Activated B cell treated with CpG ODN at 0.5 μM for 24 hours (primary cell): ENCODE measurements at regions of chr22 and their contacts with region 1.

Region 1: DNA sequence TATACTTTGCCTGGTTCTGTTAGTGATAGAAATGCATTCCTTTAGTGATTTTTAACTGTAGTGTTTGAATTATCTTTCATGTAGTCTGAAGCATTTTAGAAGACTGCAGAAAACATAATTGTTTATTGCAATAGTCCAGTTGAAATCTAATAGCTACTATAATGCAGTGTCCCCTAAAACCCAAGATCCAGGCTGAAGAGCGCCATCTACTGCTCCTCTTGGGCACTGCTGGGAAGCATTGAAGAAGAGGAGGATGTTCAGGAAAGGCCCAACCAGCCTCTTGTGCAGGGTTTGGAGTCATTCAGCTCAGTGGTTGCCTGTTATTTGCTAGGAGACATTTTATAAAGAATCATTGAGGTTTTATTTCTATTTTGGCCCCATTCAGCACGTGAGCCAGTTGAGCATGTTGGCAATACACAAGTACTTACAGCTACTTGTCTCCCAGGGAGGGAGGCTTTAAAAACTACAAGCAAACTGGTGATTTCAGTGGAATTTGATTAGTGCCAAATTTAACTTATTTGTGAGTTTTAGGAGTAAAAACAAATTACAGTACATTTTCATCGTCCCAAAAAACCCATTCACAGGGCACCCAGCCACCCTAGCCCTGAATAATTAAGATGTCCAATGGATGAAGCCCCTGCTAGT is 74.9 kb upstream of the HORMAD2 start:
- DNase-seq: peak; percentile 50
- ATAC-seq: peak; percentile 69
- H3K4me3 Mint-ChIP-seq: no peak overlapping the region
- H3K27ac Mint-ChIP-seq: no peak overlapping the region
- H3K4me1 Mint-ChIP-seq: no peaks in the 10 kb centered on the region
- H3K27me3 Mint-ChIP-seq: no peaks in the 10 kb centered on the region
- CTCF ChIP-seq: peak; percentile 98

Region 2: DNA sequence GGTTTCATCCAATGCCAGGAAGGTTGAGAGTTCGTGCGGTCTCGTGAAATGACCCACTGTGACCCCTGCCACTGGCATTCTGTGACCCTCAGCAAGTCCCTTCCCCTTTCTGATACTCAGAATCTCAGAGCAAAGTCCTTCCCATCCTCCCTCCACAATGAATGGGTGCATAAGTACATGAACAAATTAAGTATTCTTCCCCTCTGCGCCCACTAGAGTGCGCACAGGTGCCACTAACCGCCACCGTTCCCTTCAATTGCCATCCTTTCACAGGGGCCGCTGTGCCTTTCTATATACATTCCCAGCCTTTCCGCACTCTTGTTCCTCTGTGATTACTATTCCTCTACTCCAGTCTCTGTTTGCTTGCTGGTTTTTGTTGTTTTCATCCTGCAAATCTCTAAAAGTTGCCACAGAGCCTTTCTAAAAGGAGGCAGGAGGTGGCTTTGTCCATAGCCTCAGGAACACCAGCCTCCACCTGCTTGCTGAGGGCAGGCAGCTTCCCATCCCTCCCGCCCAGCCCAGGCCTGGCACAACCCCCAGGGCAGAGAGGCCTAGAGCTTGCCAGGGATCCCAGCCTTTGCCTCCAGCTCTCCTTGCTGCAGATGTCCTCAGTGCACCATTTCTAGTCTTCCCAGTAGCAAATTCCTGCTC is 610.3 kb before region 1 on chr22:
- CTCF ChIA-PET with region 1: no interaction called
- POLR2A ChIA-PET with region 1: no interaction called
- intact Hi-C with region 1: loop called (anchors 1 kb)
- DNase-seq: peak; percentile 54
- ATAC-seq: peak; percentile 87
- H3K4me3 Mint-ChIP-seq: no peak overlapping the region
- H3K27ac Mint-ChIP-seq: no peak overlapping the region
- H3K4me1 Mint-ChIP-seq: peaks cover 17% of the 10 kb centered on the region
- H3K27me3 Mint-ChIP-seq: peaks cover 2% of the 10 kb centered on the region
- CTCF ChIP-seq: peak; percentile 78

Region 3: GRCh38 chr22:29635734-29636357 is 369.5 kb before region 1 on chr22:
- CTCF ChIA-PET with region 1: interaction called, 29 read pairs
- POLR2A ChIA-PET with region 1: no interaction called
- intact Hi-C with region 1: no loop called
- DNase-seq: no peak
- ATAC-seq: no peak
- H3K4me3 Mint-ChIP-seq: no peak overlapping the region
- H3K27ac Mint-ChIP-seq: no peak overlapping the region
- H3K4me1 Mint-ChIP-seq: peaks cover 8% of the 10 kb centered on the region
- H3K27me3 Mint-ChIP-seq: no peaks in the 10 kb centered on the region
- CTCF ChIP-seq: no peak

Region 4: DNA sequence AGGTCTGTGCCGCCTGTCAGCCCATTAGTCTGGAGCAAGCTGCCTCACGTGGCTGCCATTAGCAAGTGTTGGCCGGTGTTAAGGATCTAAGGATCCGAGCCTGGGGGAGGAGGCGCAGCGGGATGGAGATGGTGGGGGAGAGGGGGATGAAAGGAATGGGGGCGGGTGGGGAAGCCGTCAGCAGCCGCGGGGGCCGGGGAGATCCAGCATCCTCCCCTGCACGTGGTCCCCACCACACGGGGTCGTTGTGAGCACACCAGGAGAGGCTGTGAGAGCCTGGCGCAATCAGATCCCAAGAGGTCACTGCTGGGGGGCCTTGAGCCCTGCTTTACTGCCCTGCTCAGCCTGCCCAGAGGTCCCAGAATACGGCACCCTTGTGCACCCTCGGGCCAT is 278.2 kb before region 1 on chr22:
- CTCF ChIA-PET with region 1: interaction called, 4 read pairs
- POLR2A ChIA-PET with region 1: no interaction called
- intact Hi-C with region 1: loop called (anchors 1 kb)
- DNase-seq: no peak
- ATAC-seq: no peak
- H3K4me3 Mint-ChIP-seq: no peak overlapping the region
- H3K27ac Mint-ChIP-seq: no peak overlapping the region
- H3K4me1 Mint-ChIP-seq: no peaks in the 10 kb centered on the region
- H3K27me3 Mint-ChIP-seq: peaks cover 3% of the 10 kb centered on the region
- CTCF ChIP-seq: no peak

Region 5: DNA sequence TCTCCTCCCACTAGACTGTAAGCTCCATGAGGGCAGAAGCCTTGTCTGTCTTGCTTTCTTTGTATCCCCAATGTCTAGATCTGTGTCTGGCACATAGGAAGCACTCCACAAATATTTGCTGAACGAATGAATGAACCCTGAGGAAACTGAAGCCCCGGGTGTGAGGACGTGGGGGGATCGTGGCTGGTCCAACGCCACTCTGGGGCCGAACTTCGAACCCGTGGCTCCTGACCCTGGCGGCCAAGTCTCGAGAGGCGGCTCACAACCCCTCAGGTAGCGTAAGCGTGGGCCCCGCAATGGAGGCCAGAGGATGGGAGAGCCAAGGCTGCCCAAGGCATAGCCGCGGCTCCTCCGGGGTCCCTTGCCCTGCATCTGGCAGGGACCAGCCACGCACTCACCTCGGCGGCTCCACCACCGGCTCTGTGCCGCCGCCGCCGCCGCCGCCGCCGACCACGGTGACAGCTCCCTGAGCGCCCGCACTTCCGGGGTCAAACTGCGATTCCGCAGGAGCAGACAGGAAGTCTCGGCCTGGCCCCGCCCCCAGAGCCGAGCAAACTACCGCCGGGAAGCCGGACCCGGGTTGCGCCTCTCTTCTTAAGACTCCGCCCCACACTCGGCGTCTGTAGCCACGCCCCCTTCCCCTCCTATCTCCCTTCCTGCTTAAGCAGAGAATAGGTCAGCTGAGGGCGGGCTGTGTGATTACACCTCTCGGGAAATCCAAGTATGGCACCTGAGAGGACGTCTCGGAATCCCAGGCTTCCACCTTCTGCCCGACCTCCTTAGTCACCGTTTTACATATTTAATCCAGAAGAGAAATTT is 167.3 kb before region 1 on chr22 and contains the start of gene ASCC2:
- CTCF ChIA-PET with region 1: interaction called, 12 read pairs
- POLR2A ChIA-PET with region 1: interaction called, 3 read pairs
- intact Hi-C with region 1: loop called (anchors 2 kb)
- DNase-seq: peak; percentile 97
- ATAC-seq: peak; percentile 99
- H3K4me3 Mint-ChIP-seq: peak within 1 kb of the TSS; percentile 97
- H3K27ac Mint-ChIP-seq: peak within 1 kb of the TSS; percentile 96
- H3K4me1 Mint-ChIP-seq: peaks cover 37% of the 10 kb centered on the region
- H3K27me3 Mint-ChIP-seq: no peaks in the 10 kb centered on the region
- CTCF ChIP-seq: no peak
- total RNA-seq, gene ASCC2: 88.1 and 89.7 TPM in 2 replicates

Region 6: DNA sequence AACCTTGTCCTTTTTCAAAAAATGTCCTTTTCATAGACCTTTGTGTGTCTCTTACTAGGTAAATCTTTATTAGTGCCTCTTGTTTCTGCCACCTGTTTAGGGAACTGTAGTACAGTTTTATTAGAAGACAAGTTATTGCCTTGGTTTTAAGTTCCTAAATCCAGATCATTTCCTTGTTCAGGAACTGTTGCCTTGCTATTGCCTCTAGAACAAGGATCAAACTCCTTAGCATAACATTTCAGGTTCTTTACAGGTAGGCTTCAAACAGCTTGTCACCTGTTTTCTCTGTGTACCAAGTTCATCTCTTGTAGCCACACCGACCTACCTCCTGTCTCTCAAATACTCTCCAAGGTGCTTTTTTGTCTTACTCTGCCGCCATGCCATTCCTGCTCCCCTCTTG is 47.2 kb before region 1 on chr22:
- CTCF ChIA-PET with region 1: no interaction called
- POLR2A ChIA-PET with region 1: no interaction called
- intact Hi-C with region 1: no loop called
- DNase-seq: no peak
- ATAC-seq: no peak
- H3K4me3 Mint-ChIP-seq: no peak overlapping the region
- H3K27ac Mint-ChIP-seq: no peak overlapping the region
- H3K4me1 Mint-ChIP-seq: peaks cover 2% of the 10 kb centered on the region
- H3K27me3 Mint-ChIP-seq: no peaks in the 10 kb centered on the region
- CTCF ChIP-seq: no peak

Region 7: GRCh38 chr22:29994027-29994715 is 11.2 kb before region 1 on chr22:
- CTCF ChIA-PET with region 1: interaction called, 16 read pairs
- POLR2A ChIA-PET with region 1: no interaction called
- intact Hi-C with region 1: no loop called
- DNase-seq: no peak
- ATAC-seq: no peak
- H3K4me3 Mint-ChIP-seq: no peak overlapping the region
- H3K27ac Mint-ChIP-seq: no peak overlapping the region
- H3K4me1 Mint-ChIP-seq: no peaks in the 10 kb centered on the region
- H3K27me3 Mint-ChIP-seq: no peaks in the 10 kb centered on the region
- CTCF ChIP-seq: no peak

Region 8: GRCh38 chr22:30094804-30095203 is 89.5 kb after region 1 on chr22:
- CTCF ChIA-PET with region 1: no interaction called
- POLR2A ChIA-PET with region 1: no interaction called
- intact Hi-C with region 1: no loop called
- DNase-seq: no peak
- ATAC-seq: no peak
- H3K4me3 Mint-ChIP-seq: no peak overlapping the region
- H3K27ac Mint-ChIP-seq: no peak overlapping the region
- H3K4me1 Mint-ChIP-seq: no peaks in the 10 kb centered on the region
- H3K27me3 Mint-ChIP-seq: peaks cover 15% of the 10 kb centered on the region
- CTCF ChIP-seq: no peak